ENCODE measurements at regions of chr18 and their contacts with region 1.

Region 1: DNA sequence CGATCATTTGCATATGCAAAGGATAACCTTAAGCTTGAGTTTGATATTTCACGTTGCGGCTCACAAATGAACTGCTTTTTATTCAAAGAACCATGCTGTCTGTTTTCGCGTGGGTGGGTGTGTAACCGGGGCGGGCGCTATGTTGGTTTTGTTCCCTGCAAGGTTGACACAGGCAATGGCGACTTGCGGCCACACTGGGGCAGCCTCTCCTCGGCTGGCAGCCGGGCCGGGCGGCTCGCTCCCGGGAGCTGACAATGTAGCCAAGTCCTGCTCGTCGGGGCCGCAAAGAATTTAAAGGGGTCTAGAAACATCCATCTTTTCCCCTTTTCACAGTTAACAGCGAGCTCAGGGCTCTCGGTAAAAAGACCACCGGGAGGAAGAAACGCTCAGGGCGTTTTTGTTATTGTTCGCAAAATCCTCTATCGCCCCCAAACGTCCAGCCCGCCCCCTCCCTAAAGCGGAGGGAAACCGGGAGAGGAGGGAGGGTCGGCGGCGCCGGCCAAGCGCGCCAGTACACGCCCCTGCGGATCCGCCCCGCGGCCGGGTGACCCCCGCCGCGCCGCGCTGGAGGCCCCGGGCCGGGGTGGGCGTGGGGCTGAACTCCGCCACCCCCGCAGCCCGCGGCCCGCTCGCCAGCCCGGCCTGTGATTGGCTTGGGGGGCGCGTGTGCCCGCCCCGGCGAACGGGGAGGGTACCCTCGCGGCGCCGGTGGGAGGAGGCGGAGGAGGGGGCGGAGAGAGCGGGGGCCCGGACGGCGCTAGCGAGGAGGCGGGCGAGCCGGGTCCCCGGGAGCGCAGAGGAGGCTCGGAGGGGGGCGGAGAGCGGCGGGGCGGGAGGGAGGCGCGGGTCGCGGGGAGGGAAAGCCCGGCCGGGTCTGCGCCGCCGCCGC is at the start of gene NEDD4L:
- DNase-seq: peak; percentile 62
- ATAC-seq: peak; percentile 93
- H3K4me3 ChIP-seq: peak within 1 kb of the TSS; percentile 78 to 83
- H3K27ac ChIP-seq: peak within 1 kb of the TSS; percentile 39; the same call in 1 of the 2 replicates
- H3K4me1 ChIP-seq: peaks cover 4% of the 10 kb centered on the region
- H3K27me3 ChIP-seq: no peaks in the 10 kb centered on the region
- CTCF ChIP-seq: peak; percentile 84
- total RNA-seq, gene NEDD4L: 42.9 TPM

Region 2: GRCh38 chr18:57881818-57882413 is 161.8 kb before region 1 on chr18:
- CTCF ChIA-PET with region 1: interaction called, 11 read pairs
- POLR2A ChIA-PET with region 1: no interaction called
- in situ Hi-C with region 1: no loop called
- intact Hi-C with region 1: loop called (anchors 2 kb)
- DNase-seq: peak; percentile 80
- ATAC-seq: peak; percentile 96
- H3K4me3 ChIP-seq: no peak overlapping the region
- H3K27ac ChIP-seq: no peak overlapping the region; the same call in 1 of the 2 replicates
- H3K4me1 ChIP-seq: no peaks in the 10 kb centered on the region
- H3K27me3 ChIP-seq: no peaks in the 10 kb centered on the region
- CTCF ChIP-seq: peak; percentile 80

Region 3: DNA sequence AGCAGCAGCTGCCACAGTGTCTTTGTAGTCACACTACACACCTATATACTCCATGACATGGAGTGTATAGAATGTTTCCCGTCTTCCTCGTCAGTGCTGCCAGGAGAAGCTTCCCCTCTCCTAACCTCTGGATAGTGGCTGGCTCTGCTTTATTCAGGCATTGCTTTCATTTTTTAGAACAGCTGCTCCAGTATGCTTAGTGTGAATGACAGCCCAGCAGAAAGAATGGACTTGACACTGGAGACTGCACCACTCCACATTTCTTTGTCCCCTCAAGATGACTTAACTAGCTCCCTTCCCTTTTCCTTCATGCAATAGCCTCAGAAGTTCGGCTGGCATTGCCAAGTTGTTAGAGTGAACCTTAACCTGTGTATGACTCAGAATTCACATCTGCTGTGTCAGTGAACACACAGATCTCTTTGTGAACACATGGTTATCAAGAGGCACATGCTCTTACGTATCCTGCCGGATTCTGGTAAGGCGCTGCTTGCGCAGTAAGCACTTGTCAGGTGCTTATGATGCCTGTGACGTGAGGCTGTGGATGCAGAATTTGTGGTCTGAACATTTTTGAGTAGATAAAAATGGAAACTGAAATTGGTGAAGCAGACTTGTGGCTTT is 74.2 kb after region 1 on chr18:
- CTCF ChIA-PET with region 1: interaction called, 4 read pairs
- POLR2A ChIA-PET with region 1: no interaction called
- in situ Hi-C with region 1: no loop called
- intact Hi-C with region 1: loop called (anchors 1 kb)
- DNase-seq: peak; percentile 69
- ATAC-seq: peak; percentile 64; the same call in 1 of the 2 replicates
- H3K4me3 ChIP-seq: no peak overlapping the region
- H3K27ac ChIP-seq: no peak overlapping the region
- H3K4me1 ChIP-seq: peaks cover 5% of the 10 kb centered on the region; the same call in 1 of the 2 replicates
- H3K27me3 ChIP-seq: no peaks in the 10 kb centered on the region
- CTCF ChIP-seq: no peak

Measured in Panc1 (cell line).